ENCODE measurements at regions of chr3 and their contacts with region 1.

Region 1: DNA sequence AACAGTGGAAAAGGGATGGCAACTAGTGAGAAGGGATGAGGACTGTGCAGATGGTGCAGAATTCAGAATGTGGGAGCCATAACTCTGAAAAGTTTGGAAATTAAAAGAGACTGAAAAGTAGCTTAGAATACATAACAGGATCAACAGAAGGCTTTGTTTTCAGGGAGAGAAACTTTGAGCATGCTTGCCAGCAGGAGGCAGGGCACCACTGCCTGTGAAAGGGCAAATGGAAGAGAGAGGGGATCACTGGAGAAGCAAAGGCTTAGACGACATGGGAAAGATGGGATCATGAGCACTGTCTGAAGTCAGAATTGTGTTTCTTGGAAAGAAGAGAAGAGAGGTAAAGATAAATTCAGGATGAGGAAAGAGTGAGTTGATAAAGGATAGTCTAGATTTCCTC is 99.6 kb downstream of the ABI3BP start:
- DNase-seq: peak; percentile 32
- H3K4me3 ChIP-seq: no peak overlapping the region
- H3K27ac ChIP-seq: no peak overlapping the region
- H3K4me1 ChIP-seq: no peaks in the 10 kb centered on the region
- H3K27me3 ChIP-seq: no peaks in the 10 kb centered on the region
- CTCF ChIP-seq: peak; percentile 64 to 87

Region 2: GRCh38 chr3:100825574-100825973 is 68.0 kb before region 1 on chr3:
- CTCF ChIA-PET with region 1: no interaction called
- dilution Hi-C with region 1: no loop called
- in situ Hi-C with region 1: no loop called
- intact Hi-C with region 1: loop called (anchors 1 kb)
- DNase-seq: no peak
- H3K4me3 ChIP-seq: no peak overlapping the region
- H3K27ac ChIP-seq: no peak overlapping the region
- H3K4me1 ChIP-seq: no peaks in the 10 kb centered on the region
- H3K27me3 ChIP-seq: peaks cover 2% of the 10 kb centered on the region
- CTCF ChIP-seq: no peak

Region 3: DNA sequence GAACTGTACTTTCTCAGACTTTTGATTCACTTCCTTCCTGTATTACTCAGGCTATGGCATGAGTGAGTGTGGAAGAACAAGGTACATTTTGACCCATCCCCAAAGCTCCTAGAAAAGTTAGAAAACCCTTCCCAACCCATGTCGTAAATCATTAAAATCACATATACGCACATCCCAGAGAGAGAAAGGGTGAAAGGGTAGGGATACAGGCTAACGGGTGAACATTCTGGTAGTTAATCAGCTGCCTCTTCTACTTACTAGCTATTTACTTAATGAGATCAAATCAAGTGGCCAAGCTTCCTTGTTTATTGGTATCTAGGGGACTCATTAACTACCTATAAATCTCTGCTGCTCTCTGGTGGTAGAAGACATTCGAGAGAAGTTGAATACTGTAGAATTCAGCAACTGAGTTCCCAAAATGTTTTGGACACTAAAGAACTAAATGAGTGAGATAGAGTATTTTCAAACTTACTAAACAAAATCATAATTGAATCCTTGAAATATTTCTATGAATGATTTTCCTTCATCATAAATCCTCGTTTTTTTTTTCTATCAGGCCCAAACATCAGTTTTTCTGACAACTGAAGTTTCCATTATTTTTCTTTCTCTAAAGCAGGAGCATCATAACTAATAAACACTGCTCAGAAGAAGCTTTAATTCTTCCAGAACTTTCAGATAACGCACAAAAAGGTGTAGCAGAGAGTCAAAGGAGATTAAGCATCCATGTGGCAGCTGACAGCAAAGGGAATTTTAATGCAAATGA is 302.5 kb after region 1 on chr3:
- CTCF ChIA-PET with region 1: interaction called, 14 read pairs
- dilution Hi-C with region 1: no loop called
- in situ Hi-C with region 1: loop called in 1 of 2 experiments (anchors 5 kb)
- intact Hi-C with region 1: loop called (anchors 1 kb)
- DNase-seq: peak; percentile 60
- H3K4me3 ChIP-seq: no peak overlapping the region
- H3K27ac ChIP-seq: peak overlapping the region; percentile 39
- H3K4me1 ChIP-seq: peaks cover 15% of the 10 kb centered on the region
- H3K27me3 ChIP-seq: no peaks in the 10 kb centered on the region
- CTCF ChIP-seq: peak; percentile 61 to 74

Region 4: GRCh38 chr3:101243285-101244211 is 350.0 kb after region 1 on chr3:
- CTCF ChIA-PET with region 1: no interaction called
- dilution Hi-C with region 1: no loop called
- in situ Hi-C with region 1: no loop called
- intact Hi-C with region 1: no loop called
- DNase-seq: no peak
- H3K4me3 ChIP-seq: no peak overlapping the region
- H3K27ac ChIP-seq: no peak overlapping the region
- H3K4me1 ChIP-seq: no peaks in the 10 kb centered on the region
- H3K27me3 ChIP-seq: no peaks in the 10 kb centered on the region
- CTCF ChIP-seq: no peak

Region 5: DNA sequence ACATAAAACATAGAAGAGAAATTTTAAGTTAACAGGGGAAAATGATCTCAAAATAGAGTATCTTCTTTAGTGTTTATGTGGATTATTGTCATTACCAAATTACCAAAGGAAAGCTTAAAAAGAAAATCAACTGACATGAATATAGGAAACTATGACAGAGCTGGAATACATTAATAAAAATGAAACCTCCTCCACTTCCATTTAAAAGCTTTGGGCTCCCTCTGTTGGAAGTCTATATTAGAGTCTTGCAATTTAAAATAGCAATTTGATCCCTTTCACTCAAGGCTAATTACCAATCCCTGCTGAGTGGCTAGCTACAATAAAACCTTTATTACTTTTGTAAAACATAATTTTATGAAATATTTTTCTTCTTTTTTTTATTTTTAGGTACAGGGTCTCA is 488.2 kb after region 1 on chr3:
- CTCF ChIA-PET with region 1: interaction called, 5 read pairs
- dilution Hi-C with region 1: no loop called
- in situ Hi-C with region 1: no loop called
- intact Hi-C with region 1: loop called (anchors 2 kb)
- DNase-seq: peak; percentile 21
- H3K4me3 ChIP-seq: no peak overlapping the region
- H3K27ac ChIP-seq: no peak overlapping the region
- H3K4me1 ChIP-seq: no peaks in the 10 kb centered on the region
- H3K27me3 ChIP-seq: no peaks in the 10 kb centered on the region
- CTCF ChIP-seq: peak; percentile 45 to 46

Region 6: GRCh38 chr3:101561630-101562328 is 668.2 kb after region 1 on chr3 and contains the start of gene TRMT10C:
- CTCF ChIA-PET with region 1: no interaction called
- dilution Hi-C with region 1: no loop called
- in situ Hi-C with region 1: no loop called
- intact Hi-C with region 1: loop called (anchors 10 kb)
- DNase-seq: peak; percentile 91
- H3K4me3 ChIP-seq: peak within 1 kb of the TSS; percentile 71 to 97 (median 92)
- H3K27ac ChIP-seq: peak within 1 kb of the TSS; percentile 89
- H3K4me1 ChIP-seq: peaks cover 14% of the 10 kb centered on the region
- H3K27me3 ChIP-seq: no peaks in the 10 kb centered on the region
- CTCF ChIP-seq: no peak
- total RNA-seq, gene TRMT10C: 21.8 to 27.9 TPM